Activated CD4-positive, alpha-beta T cell treated with anti-CD3 and anti-CD28 coated beads for 36 hours (primary cell): ENCODE measurements at regions of chr7 and their contacts with region 1.

Region 1: GRCh38 chr7:131107337-131108211 is 220.1 kb upstream of the MKLN1 start:
- DNase-seq: peak; percentile 83
- ATAC-seq: peak; percentile 47
- H3K4me3 Mint-ChIP-seq: peak overlapping the region; percentile 95
- H3K27ac Mint-ChIP-seq: peak overlapping the region; percentile 97
- H3K4me1 Mint-ChIP-seq: peaks cover 66% of the 10 kb centered on the region
- H3K27me3 Mint-ChIP-seq: no peaks in the 10 kb centered on the region

Region 2: GRCh38 chr7:129611246-129612111 is 1496.1 kb before region 1 on chr7 and contains the start of gene NRF1:
- CTCF ChIA-PET with region 1: no interaction called
- POLR2A ChIA-PET with region 1: no interaction called
- intact Hi-C with region 1: loop called in 1 of 2 experiments (anchors 10 kb)
- DNase-seq: peak; percentile 96
- ATAC-seq: peak; percentile 87
- H3K4me3 Mint-ChIP-seq: peak within 1 kb of the TSS; percentile 90
- H3K27ac Mint-ChIP-seq: peak within 1 kb of the TSS; percentile 96
- H3K4me1 Mint-ChIP-seq: peaks cover 61% of the 10 kb centered on the region
- H3K27me3 Mint-ChIP-seq: no peaks in the 10 kb centered on the region
- total RNA-seq, gene NRF1: 20.5 to 28.9 TPM

Region 3: GRCh38 chr7:130896898-130897514 is 210.6 kb before region 1 on chr7:
- CTCF ChIA-PET with region 1: no interaction called
- POLR2A ChIA-PET with region 1: no interaction called
- intact Hi-C with region 1: loop called in 1 of 2 experiments (anchors 5 kb)
- DNase-seq: peak; percentile 87
- ATAC-seq: peak; percentile 56
- H3K4me3 Mint-ChIP-seq: peak overlapping the region; percentile 22
- H3K27ac Mint-ChIP-seq: peak overlapping the region; percentile 88
- H3K4me1 Mint-ChIP-seq: peaks cover 94% of the 10 kb centered on the region
- H3K27me3 Mint-ChIP-seq: no peaks in the 10 kb centered on the region

Region 4: DNA sequence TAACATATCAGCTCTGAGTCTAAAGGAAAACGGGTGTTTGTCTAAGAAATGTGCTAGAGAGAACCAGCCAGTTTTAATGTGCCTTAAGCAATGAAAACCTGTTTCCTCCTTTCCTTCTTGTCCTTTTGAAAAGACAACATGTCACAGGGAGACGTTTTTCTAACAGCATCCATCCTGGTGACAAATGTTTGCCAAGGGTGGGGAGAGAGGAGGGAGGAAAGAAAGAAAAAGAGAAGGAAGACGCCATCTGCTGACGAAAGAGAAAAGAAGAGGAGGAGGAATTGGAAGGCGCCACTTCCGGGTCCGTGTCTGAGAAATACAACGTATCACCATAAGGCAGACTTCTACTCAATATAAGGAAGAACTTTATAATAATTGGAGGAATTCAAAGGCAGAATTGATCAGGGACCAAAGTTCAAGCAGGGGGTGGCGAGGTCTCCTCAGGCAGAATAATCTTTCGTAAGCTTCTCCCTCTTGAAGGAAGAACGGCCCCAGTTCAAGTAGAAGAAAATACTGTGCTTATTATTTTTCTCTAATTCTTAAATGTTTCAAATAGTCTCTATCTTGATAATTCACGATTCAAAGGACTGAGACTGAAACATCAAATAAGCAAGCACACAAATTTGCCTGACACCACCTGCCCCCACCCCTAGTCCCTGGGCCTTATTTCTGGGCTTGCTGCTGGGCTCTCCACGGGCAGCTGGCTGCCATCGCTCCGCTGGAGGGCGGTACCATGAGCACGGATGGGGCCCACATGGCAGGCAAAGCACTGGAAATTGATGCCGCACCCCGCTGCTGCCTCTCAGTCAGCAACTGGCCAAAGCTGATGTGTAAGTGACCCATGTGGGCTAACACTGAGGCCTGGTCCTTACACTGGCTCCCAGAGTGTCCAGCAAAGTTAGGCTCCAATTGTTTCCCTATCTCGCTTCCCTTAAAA is 99.9 kb before region 1 on chr7:
- CTCF ChIA-PET with region 1: interaction called, 4 read pairs
- POLR2A ChIA-PET with region 1: no interaction called
- intact Hi-C with region 1: loop called (anchors 2 to 5 kb)
- DNase-seq: peak; percentile 80
- ATAC-seq: peak; percentile 27
- H3K4me3 Mint-ChIP-seq: peak overlapping the region; percentile 68
- H3K27ac Mint-ChIP-seq: peak overlapping the region; percentile 96
- H3K4me1 Mint-ChIP-seq: peaks cover 90% of the 10 kb centered on the region
- H3K27me3 Mint-ChIP-seq: no peaks in the 10 kb centered on the region

Region 5: GRCh38 chr7:131231381-131232220 is 124.0 kb after region 1 on chr7:
- CTCF ChIA-PET with region 1: interaction called, 4 read pairs
- POLR2A ChIA-PET with region 1: interaction called, 5 read pairs
- intact Hi-C with region 1: loop called (anchors 1 kb)
- DNase-seq: peak; percentile 77
- ATAC-seq: peak; percentile 72
- H3K4me3 Mint-ChIP-seq: peak overlapping the region; percentile 56
- H3K27ac Mint-ChIP-seq: peak overlapping the region; percentile 93
- H3K4me1 Mint-ChIP-seq: peaks cover 47% of the 10 kb centered on the region
- H3K27me3 Mint-ChIP-seq: no peaks in the 10 kb centered on the region

Region 6: DNA sequence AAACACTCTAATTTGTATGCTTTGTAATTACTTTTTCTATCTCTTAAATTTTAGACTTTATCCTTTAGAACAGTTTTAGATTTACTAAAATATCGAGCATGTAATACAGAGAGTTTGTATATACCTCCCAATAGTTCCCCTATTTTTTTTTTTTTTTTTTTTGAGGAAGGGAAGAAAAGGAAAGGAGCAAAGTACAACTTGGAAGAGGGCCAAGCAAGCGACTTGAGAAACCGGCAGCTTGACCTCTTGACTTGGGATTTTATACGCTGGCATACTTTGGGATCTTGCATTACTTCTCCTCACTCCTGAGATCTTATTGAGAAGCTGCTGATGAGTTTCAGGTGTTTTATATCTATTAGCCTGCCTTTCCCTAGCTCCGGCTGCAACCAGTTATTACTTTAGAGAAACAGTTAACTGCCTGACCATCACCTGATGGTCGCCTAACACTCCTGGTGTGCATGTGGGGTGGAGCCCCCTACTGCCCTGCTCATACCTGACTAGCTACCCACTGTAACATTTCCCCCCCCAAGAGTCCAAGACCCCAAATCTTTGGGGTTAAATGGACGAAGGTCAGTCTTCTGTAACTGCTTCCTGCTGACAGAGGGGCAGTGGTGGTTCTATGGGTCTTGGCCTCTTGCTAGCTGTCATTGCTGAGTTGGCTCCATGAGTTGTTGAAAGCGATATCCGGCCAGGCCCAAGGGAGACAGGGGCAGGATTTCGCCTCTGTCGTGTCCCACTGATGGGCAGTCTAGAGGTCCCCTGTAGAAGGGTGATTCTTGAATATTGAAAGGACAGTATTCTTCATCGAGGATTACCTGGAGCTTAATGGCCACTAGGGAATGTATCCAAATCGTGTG is 248.6 kb after region 1 on chr7:
- CTCF ChIA-PET with region 1: no interaction called
- POLR2A ChIA-PET with region 1: no interaction called
- intact Hi-C with region 1: no loop called
- DNase-seq: no peak
- ATAC-seq: no peak
- H3K4me3 Mint-ChIP-seq: no peak overlapping the region
- H3K27ac Mint-ChIP-seq: no peak overlapping the region
- H3K4me1 Mint-ChIP-seq: peaks cover 67% of the 10 kb centered on the region
- H3K27me3 Mint-ChIP-seq: no peaks in the 10 kb centered on the region

Region 7: GRCh38 chr7:131383417-131384285 is 276.1 kb after region 1 on chr7:
- CTCF ChIA-PET with region 1: no interaction called
- POLR2A ChIA-PET with region 1: no interaction called
- intact Hi-C with region 1: loop called in 1 of 2 experiments (anchors 5 kb)
- DNase-seq: no peak
- ATAC-seq: peak; percentile 53
- H3K4me3 Mint-ChIP-seq: no peak overlapping the region
- H3K27ac Mint-ChIP-seq: peak overlapping the region; percentile 12
- H3K4me1 Mint-ChIP-seq: peaks cover 40% of the 10 kb centered on the region
- H3K27me3 Mint-ChIP-seq: no peaks in the 10 kb centered on the region